Mammary epithelial cell (primary cell): ENCODE measurements at regions of chr11 and their contacts with region 1.

Region 1: DNA sequence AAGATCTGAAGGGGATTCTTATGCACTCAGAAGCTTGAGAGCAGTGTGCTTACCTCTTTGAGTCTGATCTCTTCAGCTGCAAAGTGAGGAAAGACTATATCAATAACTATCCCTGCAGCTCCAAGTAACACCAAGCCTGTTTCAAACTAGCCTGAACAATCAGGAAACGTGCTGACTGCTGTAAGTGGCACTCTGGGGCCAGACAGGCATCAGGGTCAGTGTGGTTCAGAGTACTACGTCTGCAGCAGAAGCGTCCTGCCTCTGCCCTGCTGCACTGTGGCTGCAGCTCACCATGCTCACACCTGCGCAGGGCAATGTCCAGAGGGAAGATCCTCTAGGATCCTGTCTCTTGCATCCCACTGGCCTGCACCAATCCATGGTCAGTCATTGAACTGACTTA is 25.5 kb upstream of the LINC01488 start:
- DNase-seq: no peak
- H3K4me3 ChIP-seq: no peak overlapping the region
- H3K27ac ChIP-seq: no peak overlapping the region
- H3K4me1 ChIP-seq: peaks cover 9% of the 10 kb centered on the region
- H3K27me3 ChIP-seq: no peaks in the 10 kb centered on the region
- CTCF ChIP-seq: no peak

Region 2: DNA sequence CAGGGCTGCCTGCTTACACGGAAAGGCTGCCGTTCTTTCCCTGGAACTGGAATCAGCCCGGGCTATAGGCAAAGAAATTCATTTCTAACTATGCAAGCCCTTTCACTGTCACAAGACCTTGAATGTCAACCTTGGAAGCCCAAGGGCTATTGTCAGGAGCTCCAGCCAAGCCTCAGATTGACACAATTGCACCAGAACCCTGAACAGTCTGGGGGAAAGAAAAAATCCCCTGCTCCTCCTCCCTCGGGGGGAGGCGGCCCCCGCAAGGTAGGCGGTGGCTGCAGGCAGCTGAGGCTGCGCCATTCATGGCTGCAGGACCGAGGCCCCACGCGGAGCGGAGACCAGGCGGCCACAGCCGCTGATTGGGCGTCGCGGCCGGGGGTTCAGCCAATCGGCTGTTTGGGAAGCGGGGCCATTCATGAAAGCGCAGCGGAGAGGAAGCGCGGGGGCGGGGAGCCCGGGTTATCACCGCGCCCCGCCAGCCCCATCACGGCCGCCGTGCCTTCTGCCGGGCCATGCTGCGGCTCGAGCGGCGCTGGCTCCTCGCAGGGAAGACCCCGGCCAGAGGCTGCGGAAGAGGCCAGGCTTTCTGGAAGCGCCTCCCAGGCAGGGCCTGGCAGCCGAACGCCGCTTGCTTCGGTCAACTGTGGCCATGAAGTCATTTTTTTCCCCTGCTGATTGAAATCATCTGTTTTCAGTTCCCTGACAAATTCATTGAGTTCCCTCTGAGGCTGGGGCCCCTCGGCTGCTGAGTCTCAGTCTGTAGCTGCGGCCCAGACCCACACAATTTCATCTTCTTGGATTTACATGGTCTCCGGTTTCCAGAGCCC is 12.6 kb before region 1 on chr11:
- CTCF ChIA-PET with region 1: no interaction called
- dilution Hi-C with region 1: no loop called
- in situ Hi-C with region 1: no loop called
- intact Hi-C with region 1: no loop called
- DNase-seq: peak; percentile 87
- H3K4me3 ChIP-seq: peak overlapping the region in 2 of 3 experiments; percentile 32 to 40
- H3K27ac ChIP-seq: peak overlapping the region; percentile 39
- H3K4me1 ChIP-seq: peaks cover 43% of the 10 kb centered on the region
- H3K27me3 ChIP-seq: no peaks in the 10 kb centered on the region
- CTCF ChIP-seq: no peak

Region 3: DNA sequence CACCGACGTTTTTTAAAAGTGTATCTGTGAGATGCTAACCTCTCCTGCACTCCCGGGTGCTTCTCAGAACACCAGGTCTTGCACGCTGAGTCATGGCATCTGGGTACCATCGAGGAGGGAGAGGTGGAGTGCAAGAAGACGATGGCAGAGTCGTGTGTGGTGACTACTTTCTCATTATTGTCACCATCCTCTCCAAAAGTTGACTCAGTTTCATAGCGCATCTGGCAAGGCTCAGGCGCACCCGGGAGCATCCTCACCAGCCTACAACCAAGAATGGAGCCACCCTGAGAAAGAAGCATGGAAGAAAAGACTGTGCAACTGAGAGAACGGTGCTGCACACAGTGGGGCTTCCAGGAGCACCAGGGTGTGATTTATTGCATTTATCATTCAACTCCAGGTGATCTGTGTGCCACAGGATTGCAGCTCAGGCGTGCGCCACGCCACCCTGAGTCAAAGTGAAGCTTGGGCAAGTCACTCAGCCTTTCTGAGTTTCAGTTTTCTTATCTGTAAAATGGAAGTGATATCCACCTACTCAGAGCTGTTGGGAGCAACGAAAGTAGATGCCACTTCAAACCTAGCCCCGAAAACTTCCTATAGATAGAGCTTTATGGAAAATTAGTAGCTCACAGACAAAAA is 90.9 kb after region 1 on chr11:
- CTCF ChIA-PET with region 1: no interaction called
- dilution Hi-C with region 1: loop called (anchors 5 kb)
- in situ Hi-C with region 1: no loop called
- intact Hi-C with region 1: no loop called
- DNase-seq: no peak
- H3K4me3 ChIP-seq: no peak overlapping the region
- H3K27ac ChIP-seq: no peak overlapping the region
- H3K4me1 ChIP-seq: no peaks in the 10 kb centered on the region
- H3K27me3 ChIP-seq: no peaks in the 10 kb centered on the region
- CTCF ChIP-seq: no peak